ENCODE measurements at regions of chr2 and their contacts with region 1.

Region 1: GRCh38 chr2:155830817-155831574 is 501.5 kb downstream of the NR4A2 start:
- DNase-seq: no peak
- H3K4me3 ChIP-seq: no peak overlapping the region
- H3K4me3 Mint-ChIP-seq: no peak overlapping the region
- H3K27ac Mint-ChIP-seq: no peak overlapping the region
- H3K4me1 ChIP-seq: peaks cover 6% of the 10 kb centered on the region
- H3K4me1 Mint-ChIP-seq: peaks cover 7% of the 10 kb centered on the region
- H3K27me3 ChIP-seq: no peaks in the 10 kb centered on the region
- H3K27me3 Mint-ChIP-seq: no peaks in the 10 kb centered on the region
- CTCF ChIP-seq: no peak

Region 2: DNA sequence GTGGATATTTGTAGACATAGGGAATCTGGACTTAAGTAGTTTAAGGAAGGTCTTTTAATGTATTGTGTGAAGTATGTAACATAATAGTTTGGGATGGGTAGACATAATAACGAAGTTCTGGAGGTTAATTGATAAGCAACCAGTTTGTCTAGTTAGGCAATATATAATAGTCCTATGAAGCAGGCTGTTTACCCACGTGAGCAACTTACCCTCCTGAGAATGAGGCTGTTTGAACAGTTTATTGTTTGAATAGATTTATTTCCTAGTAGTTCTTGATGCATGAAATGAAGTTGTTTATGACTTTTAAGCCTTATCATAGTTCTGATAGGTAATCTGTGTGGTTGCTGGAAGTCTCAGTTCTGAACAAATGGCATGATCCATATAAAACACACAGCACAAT is 1597.8 kb before region 1 on chr2:
- CTCF ChIA-PET with region 1: no interaction called
- POLR2A ChIA-PET with region 1: no interaction called
- intact Hi-C with region 1: loop called (anchors 10 kb)
- DNase-seq: no peak
- H3K4me3 ChIP-seq: no peak overlapping the region
- H3K4me3 Mint-ChIP-seq: no peak overlapping the region
- H3K27ac Mint-ChIP-seq: no peak overlapping the region
- H3K4me1 ChIP-seq: no peaks in the 10 kb centered on the region
- H3K4me1 Mint-ChIP-seq: no peaks in the 10 kb centered on the region
- H3K27me3 ChIP-seq: no peaks in the 10 kb centered on the region
- H3K27me3 Mint-ChIP-seq: no peaks in the 10 kb centered on the region
- CTCF ChIP-seq: no peak

Region 3: GRCh38 chr2:155733091-155733853 is 97.7 kb before region 1 on chr2:
- CTCF ChIA-PET with region 1: no interaction called
- POLR2A ChIA-PET with region 1: no interaction called
- intact Hi-C with region 1: no loop called
- DNase-seq: no peak
- H3K4me3 ChIP-seq: no peak overlapping the region
- H3K4me3 Mint-ChIP-seq: no peak overlapping the region
- H3K27ac Mint-ChIP-seq: no peak overlapping the region
- H3K4me1 ChIP-seq: no peaks in the 10 kb centered on the region
- H3K4me1 Mint-ChIP-seq: no peaks in the 10 kb centered on the region
- H3K27me3 ChIP-seq: no peaks in the 10 kb centered on the region
- H3K27me3 Mint-ChIP-seq: no peaks in the 10 kb centered on the region
- CTCF ChIP-seq: no peak

Measured in Caco-2 (cell line).